Left cardiac atrium (tissue), 4 donors: ENCODE measurements at regions of chr20 and their contacts with region 1.

Region 1: DNA sequence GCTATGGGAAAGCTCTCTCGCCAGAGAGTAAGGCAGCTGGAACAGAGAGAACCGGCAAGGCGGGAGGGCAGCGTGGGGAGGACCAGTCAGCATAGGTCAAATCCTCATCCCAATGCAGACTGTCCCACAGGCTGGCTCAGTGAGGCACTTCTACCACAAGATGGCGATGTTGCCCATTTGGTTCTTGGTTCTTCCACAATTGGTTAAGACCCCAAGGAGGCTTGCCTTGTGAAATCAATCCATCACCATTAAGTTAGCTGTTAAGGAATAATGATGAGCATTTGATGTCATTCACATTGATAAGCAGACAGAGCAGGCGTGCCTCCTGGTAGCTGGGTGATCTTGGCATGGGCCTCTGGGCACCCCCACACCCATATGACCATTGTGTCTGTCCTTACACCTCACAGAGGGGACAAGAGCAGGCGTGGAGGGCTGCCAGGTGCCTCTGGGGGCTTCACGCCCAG is 2.4 kb downstream of the CSTL1 start:
- DNase-seq: peak; percentile 60
- ATAC-seq: peak; percentile 66 to 82

Region 2: DNA sequence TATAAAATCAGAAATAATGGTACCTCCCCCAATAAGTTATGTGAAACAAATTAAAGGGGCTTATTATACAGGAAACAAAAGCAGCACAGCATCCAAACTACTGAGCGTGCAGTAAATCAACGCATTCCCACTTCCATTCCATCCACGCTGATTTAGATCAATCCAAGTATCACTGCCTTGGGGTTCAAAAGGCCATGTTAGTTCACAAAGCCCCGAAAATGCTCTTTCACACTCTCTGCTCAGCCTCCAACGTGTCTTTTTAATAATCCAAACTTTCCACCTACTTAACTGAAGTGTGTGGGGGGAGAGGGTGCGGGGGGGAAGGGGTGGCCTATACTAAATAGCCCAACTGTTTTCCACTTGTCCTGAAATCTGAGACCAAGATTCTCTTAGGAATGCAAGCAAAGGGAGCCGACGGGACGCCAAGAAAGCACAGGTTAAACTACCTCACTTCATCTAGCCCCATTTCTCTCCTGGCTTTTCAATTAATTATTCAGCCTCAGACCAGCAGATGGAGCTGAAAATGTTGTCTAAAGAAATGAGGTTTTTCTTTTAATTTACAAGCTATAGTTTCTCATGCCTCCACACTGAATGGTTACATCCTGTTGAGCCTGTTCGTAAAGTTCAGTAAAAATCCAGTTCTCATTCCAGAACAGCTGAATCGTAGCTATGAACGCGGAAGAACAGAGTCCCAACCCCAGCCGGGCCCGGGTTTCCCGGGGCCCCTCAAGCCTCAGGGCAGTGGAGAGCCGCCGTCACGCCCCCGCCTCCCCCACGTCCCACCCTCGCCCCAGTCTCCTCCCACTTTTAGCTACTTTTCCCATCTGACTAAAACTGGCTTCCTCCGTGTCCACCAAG is 92.3 kb before region 1 on chr20:
- intact Hi-C with region 1: loop called in 1 of 2 experiments (anchors 2 kb)
- DNase-seq: peak; percentile 84
- ATAC-seq: peak; percentile 79 to 85

Region 3: GRCh38 chr20:23606652-23607049 is 164.8 kb after region 1 on chr20:
- intact Hi-C with region 1: loop called (anchors 5 to 10 kb)
- DNase-seq: peak; percentile 82
- ATAC-seq: peak; percentile 93